MCF 10A (cell line): ENCODE measurements at regions of chr12 and their contacts with region 1.

Region 1: GRCh38 chr12:18296201-18296908 is 35.0 kb downstream of the PIK3C2G start:
- DNase-seq: peak; percentile 46
- H3K4me3 Mint-ChIP-seq: peak overlapping the region; percentile 77
- H3K27ac Mint-ChIP-seq: peak overlapping the region; percentile 96
- H3K4me1 Mint-ChIP-seq: peaks cover 9% of the 10 kb centered on the region
- H3K27me3 Mint-ChIP-seq: no peaks in the 10 kb centered on the region
- CTCF ChIP-seq: no peak

Region 2: GRCh38 chr12:18135509-18135908 is 160.8 kb before region 1 on chr12:
- CTCF ChIA-PET with region 1: no interaction called
- POLR2A ChIA-PET with region 1: no interaction called
- intact Hi-C with region 1: no loop called
- DNase-seq: no peak
- H3K4me3 Mint-ChIP-seq: no peak overlapping the region
- H3K27ac Mint-ChIP-seq: no peak overlapping the region
- H3K4me1 Mint-ChIP-seq: peaks cover 21% of the 10 kb centered on the region
- H3K27me3 Mint-ChIP-seq: no peaks in the 10 kb centered on the region
- CTCF ChIP-seq: no peak

Region 3: DNA sequence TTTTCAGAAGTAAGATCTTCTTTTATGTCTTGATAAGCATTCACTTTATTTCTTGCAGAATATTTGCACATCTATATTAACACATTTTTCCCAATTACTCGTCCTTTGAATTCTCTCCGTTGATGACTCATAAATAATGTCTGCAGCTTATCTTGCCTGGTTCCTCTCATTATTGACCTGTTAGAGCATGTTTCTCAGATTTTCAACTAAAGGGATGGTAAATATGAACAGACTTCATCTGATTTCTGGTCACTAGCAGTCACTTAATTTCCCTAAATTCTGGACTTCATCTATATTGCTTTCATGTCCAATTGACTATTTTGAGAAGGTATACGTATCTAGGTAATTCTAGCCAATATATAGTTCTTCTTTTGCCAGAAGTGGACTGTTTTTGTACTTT is 28.9 kb before region 1 on chr12:
- CTCF ChIA-PET with region 1: interaction called, 23 read pairs
- POLR2A ChIA-PET with region 1: interaction called, 443 read pairs
- intact Hi-C with region 1: loop called (anchors 2 kb)
- DNase-seq: peak; percentile 56
- H3K4me3 Mint-ChIP-seq: peak overlapping the region; percentile 76
- H3K27ac Mint-ChIP-seq: peak overlapping the region; percentile 100
- H3K4me1 Mint-ChIP-seq: peaks cover 11% of the 10 kb centered on the region
- H3K27me3 Mint-ChIP-seq: no peaks in the 10 kb centered on the region
- CTCF ChIP-seq: no peak

Region 4: DNA sequence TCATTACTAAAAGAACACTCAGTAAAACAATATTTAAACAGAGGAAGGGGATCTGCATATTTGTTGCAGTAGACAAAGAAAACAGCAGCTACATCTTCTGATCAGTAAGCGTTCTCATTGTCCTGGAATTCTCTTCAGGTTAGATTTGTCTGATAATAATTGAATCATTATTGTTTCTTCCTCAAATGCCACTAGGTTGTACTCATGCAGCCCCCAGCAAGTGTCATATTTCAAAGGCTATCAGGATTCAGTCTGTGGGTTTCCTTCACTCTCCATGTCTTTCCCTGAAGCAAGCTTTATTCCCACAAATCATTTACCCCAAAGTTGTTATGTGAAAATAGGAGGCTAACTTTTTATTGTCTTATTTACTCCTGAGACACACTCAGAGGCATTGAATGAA is 20.4 kb before region 1 on chr12:
- CTCF ChIA-PET with region 1: interaction called, 11 read pairs
- POLR2A ChIA-PET with region 1: interaction called, 443 read pairs
- intact Hi-C with region 1: no loop called
- DNase-seq: no peak
- H3K4me3 Mint-ChIP-seq: no peak overlapping the region
- H3K27ac Mint-ChIP-seq: peak overlapping the region; percentile 63
- H3K4me1 Mint-ChIP-seq: peaks cover 33% of the 10 kb centered on the region
- H3K27me3 Mint-ChIP-seq: no peaks in the 10 kb centered on the region
- CTCF ChIP-seq: no peak